Dendritic cell treated with granulocyte-macrophage colony-stimulating factor and Interleukin-4, amounts not matched to agents 40 ng/mL and 50 ng/mL, for 4 days (primary cell): ENCODE measurements at regions of chr3 and their contacts with region 1.

Region 1: DNA sequence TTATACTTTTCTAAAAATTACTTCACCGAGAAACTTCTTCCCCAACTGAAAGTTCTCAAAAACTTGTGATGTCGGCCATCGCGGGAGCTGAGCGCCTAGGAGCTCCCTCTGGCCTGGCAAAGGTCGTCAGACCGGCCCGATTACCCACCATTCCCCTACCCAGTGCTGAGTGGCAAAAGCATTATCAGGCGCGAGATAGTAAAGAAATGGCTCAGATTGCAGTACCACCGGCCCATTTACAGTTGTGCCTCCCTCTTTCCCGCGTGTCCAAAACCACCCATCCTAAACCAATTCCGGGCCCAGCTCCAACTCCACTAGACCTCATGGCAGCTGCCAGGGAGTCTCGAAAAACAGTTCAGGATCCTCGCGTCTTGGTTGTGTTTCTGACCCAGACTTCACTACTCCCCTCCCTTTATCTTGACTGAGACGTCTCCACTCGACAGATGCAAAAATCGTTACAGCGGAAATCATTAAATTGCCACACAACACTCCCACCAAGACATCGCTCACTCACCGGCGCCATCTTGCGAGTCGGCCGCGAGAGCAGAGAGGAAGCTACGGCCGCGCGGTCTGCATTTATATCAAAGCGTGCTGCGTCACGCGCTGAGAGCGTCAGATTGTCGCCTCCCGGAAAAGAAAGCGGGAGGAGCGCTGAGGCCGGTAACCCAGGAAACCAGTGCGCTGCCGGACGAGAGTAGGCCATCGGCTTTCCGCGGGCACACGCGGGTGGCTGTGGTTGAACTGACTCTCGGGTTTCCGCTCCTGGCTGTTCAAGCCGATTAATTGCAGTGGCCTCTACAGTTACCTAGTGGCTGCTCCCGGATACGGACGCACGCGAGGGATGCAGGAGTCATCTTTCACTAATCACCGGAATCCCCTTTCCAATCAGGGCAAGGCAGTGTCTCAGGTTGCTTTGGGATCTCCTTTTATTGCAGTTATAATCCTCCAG is at the start of gene RPL22L1:
- H3K4me3 Mint-ChIP-seq: peak within 1 kb of the TSS; percentile 96
- H3K27ac Mint-ChIP-seq: peak within 1 kb of the TSS; percentile 99
- H3K4me1 Mint-ChIP-seq: peaks cover 9% of the 10 kb centered on the region
- H3K27me3 Mint-ChIP-seq: no peaks in the 10 kb centered on the region

Region 2: GRCh38 chr3:170357176-170357919 is 512.6 kb before region 1 on chr3 and contains the start of gene SKIL:
- intact Hi-C with region 1: loop called (anchors 2 kb)
- H3K4me3 Mint-ChIP-seq: peak within 1 kb of the TSS; percentile 90
- H3K27ac Mint-ChIP-seq: peak within 1 kb of the TSS; percentile 99
- H3K4me1 Mint-ChIP-seq: peaks cover 61% of the 10 kb centered on the region
- H3K27me3 Mint-ChIP-seq: no peaks in the 10 kb centered on the region

Region 3: DNA sequence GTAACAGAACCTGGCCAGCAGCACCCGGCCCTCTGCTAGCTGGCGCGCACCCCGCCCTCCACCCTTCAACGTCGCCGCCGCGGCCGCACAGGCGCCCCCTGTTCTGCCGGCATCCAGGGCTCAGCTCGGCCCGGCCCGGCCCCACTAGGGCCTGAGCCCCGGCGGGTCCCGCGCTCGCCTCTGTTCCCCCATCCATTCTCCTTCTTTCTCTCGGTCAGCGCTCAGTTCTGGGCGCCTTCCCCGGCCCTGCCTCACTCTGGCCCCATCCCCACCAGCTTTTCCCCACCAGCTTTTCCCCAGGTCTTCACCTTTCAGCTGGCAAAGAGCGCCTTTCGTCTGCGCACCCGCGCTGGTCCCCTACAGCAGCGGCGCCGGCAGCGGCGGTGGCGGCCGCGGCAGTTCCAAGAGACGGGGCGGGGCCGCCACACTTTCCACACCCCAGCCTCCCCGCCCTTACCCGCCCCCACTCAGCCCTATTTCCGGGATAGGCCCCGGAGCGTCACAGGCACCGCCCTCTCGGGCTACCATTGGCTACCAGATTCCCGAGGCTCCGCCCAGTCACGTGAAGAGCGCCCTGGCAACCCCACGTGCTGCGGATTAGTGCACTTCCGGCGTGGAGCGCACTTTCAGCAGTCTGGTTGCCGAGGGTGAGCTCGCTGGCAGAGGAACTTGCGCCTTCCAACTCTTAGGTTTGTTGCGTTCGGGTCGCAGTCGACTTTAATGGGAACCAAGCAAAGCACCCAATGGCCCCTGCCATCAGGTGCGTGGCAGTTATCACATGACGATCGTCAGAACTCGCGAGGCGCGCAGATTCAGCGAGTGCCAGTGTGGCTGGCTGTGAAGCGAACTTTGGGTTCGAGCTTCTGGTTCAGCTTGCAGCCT is 38.6 kb after region 1 on chr3 and contains the start of gene EIF5A2:
- intact Hi-C with region 1: loop called (anchors 5 kb)
- H3K4me3 Mint-ChIP-seq: peak within 1 kb of the TSS; percentile 98
- H3K27ac Mint-ChIP-seq: peak within 1 kb of the TSS; percentile 85
- H3K4me1 Mint-ChIP-seq: peaks cover 5% of the 10 kb centered on the region
- H3K27me3 Mint-ChIP-seq: peaks cover 36% of the 10 kb centered on the region

Region 4: GRCh38 chr3:171168086-171168485 is 298.2 kb after region 1 on chr3:
- intact Hi-C with region 1: no loop called
- H3K4me3 Mint-ChIP-seq: no peak overlapping the region
- H3K27ac Mint-ChIP-seq: no peak overlapping the region
- H3K4me1 Mint-ChIP-seq: peaks cover 11% of the 10 kb centered on the region
- H3K27me3 Mint-ChIP-seq: no peaks in the 10 kb centered on the region